Left ventricle myocardium superior (tissue), 1 donor: ENCODE measurements at regions of chr5 and their contacts with region 1.

Region 1: DNA sequence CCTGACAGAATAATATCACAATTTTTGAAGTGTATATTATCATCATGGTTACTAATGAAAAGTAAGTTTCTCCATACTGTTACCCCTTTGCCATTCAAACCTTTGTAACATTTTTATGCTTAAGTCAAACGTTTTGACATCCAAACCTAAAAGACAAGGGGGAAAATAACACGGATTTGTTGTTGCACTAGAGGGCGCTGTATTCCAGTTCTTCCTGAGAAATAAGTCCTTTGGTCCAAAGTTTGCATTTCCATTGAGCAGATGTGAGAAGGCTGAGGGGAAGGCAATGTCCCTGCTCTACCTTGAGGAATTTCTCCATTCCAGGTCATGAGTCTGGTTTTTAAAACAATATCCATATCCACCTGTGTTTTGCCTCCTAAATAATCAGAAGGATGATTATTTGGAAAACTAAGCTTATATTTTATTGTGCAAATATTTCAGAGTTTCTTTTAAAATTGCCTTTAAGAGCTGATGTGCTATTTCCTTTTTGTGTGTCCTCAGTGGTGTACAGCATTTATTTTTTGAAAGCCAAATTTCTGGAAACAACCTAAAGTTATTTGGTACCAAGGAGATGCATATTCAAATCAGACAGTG is 9.7 kb downstream of the LECT2 start:
- DNase-seq: no peak
- ATAC-seq: peak; percentile 64

Region 2: GRCh38 chr5:136062366-136063274 is 117.6 kb after region 1 on chr5:
- intact Hi-C with region 1: loop called (anchors 5 kb)
- DNase-seq: no peak
- ATAC-seq: no peak

Region 3: GRCh38 chr5:136174021-136174659 is 229.1 kb after region 1 on chr5:
- intact Hi-C with region 1: loop called (anchors 10 kb)
- DNase-seq: no peak
- ATAC-seq: peak; percentile 57

Region 4: DNA sequence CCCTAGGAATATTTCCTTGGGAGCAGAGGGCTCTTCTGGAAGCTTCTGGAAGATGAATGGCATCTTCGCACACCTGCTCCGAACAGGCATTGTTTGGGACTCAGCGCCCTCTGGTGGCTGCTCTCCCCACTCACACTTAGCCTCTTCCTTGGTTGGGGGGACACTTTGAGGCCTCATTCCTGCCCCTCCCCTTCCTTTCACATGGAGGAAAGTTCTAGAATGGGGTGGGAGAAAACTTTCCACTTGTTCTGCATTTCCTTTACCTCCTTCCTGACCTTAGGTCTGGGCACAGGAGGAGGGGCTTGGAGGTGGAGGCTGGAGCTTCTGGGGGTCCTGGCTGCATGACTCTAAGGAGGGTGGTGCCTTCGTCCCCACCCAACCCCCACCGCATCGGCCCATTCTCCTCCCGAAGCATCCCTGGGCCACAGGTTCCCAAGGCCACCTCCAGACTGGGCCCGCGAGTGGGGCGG is 267.2 kb after region 1 on chr5:
- intact Hi-C with region 1: loop called (anchors 10 kb)
- DNase-seq: peak; percentile 73
- ATAC-seq: peak; percentile 58